ENCODE measurements at regions of chr16 and their contacts with region 1.

Region 1: DNA sequence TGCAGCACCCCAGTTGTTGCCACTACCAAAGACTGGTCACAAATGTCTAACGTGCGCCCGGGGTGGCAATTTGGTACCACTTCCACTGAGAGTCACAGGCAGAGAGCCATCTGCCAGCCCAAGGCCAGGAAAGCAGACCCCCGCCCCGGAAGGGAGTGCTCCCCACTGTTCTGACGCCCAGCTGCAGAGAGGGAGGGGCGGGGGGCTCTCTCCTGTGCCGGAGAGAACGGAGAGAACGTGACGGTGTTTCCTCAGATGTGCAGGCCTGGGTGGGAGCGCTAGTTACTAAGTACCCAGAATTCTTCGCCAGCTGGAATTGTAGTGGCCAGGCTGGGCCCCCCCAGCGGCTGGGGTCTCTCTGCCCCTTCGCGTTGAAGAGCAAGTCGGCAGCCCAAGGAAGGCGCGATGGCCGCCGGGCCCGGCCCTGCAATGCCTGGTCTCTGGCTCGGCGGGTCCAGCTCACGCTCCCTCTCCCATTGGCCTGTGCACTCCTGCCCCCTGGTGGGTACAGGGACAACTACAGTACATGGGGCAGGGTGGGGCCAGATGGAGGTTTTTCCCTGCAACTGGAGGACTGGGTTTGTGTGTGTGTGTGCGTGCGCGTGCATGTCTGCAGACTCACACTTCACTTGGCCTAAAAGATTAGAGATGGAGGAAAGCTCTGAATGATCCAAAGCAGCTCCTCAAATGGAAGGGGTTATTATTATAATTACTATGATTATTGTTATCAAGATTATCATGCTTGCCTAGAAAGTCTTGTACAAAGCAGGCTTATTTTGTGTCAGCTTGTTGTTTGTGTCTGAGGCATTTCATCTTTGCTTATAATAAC is 107.1 kb downstream of the AMFR start:
- DNase-seq: peak; percentile 83 to 90
- H3K4me3 ChIP-seq: no peak overlapping the region
- H3K4me3 Mint-ChIP-seq: peak overlapping the region; percentile 22
- H3K27ac Mint-ChIP-seq: no peak overlapping the region
- H3K4me1 ChIP-seq: no peaks in the 10 kb centered on the region
- H3K4me1 Mint-ChIP-seq: no peaks in the 10 kb centered on the region
- H3K27me3 ChIP-seq: no peaks in the 10 kb centered on the region
- H3K27me3 Mint-ChIP-seq: peaks cover 4% of the 10 kb centered on the region
- CTCF ChIP-seq: peak; percentile 95 to 98

Region 2: GRCh38 chr16:55711959-55712876 is 606.0 kb before region 1 on chr16:
- CTCF ChIA-PET with region 1: no interaction called
- POLR2A ChIA-PET with region 1: no interaction called
- intact Hi-C with region 1: loop called (anchors 1 kb)
- DNase-seq: peak; percentile 67 to 81
- H3K4me3 ChIP-seq: no peak overlapping the region
- H3K4me3 Mint-ChIP-seq: no peak overlapping the region
- H3K27ac Mint-ChIP-seq: no peak overlapping the region
- H3K4me1 ChIP-seq: no peaks in the 10 kb centered on the region
- H3K4me1 Mint-ChIP-seq: no peaks in the 10 kb centered on the region
- H3K27me3 ChIP-seq: no peaks in the 10 kb centered on the region; the same call in 1 of the 2 replicates
- H3K27me3 Mint-ChIP-seq: peaks cover 15% of the 10 kb centered on the region
- CTCF ChIP-seq: peak; percentile 79 to 80

Region 3: GRCh38 chr16:55944377-55944802 is 373.8 kb before region 1 on chr16:
- CTCF ChIA-PET with region 1: interaction called, 10 read pairs
- POLR2A ChIA-PET with region 1: no interaction called
- intact Hi-C with region 1: loop called (anchors 1 kb)
- DNase-seq: peak; percentile 67 to 82
- H3K4me3 ChIP-seq: no peak overlapping the region
- H3K4me3 Mint-ChIP-seq: no peak overlapping the region
- H3K27ac Mint-ChIP-seq: no peak overlapping the region
- H3K4me1 ChIP-seq: peaks cover 9% of the 10 kb centered on the region; the same call in 1 of the 2 replicates
- H3K4me1 Mint-ChIP-seq: peaks cover 9% of the 10 kb centered on the region
- H3K27me3 ChIP-seq: no peaks in the 10 kb centered on the region
- H3K27me3 Mint-ChIP-seq: peaks cover 16% of the 10 kb centered on the region
- CTCF ChIP-seq: peak; percentile 90 to 98

Region 4: GRCh38 chr16:56041686-56042085 is 276.5 kb before region 1 on chr16:
- CTCF ChIA-PET with region 1: no interaction called
- POLR2A ChIA-PET with region 1: no interaction called
- intact Hi-C with region 1: loop called (anchors 1 kb)
- DNase-seq: peak; percentile 73 to 84
- H3K4me3 ChIP-seq: no peak overlapping the region
- H3K4me3 Mint-ChIP-seq: no peak overlapping the region
- H3K27ac Mint-ChIP-seq: no peak overlapping the region
- H3K4me1 ChIP-seq: no peaks in the 10 kb centered on the region
- H3K4me1 Mint-ChIP-seq: peaks cover 6% of the 10 kb centered on the region
- H3K27me3 ChIP-seq: no peaks in the 10 kb centered on the region
- H3K27me3 Mint-ChIP-seq: peaks cover 4% of the 10 kb centered on the region
- CTCF ChIP-seq: peak; percentile 57 to 64

Region 5: DNA sequence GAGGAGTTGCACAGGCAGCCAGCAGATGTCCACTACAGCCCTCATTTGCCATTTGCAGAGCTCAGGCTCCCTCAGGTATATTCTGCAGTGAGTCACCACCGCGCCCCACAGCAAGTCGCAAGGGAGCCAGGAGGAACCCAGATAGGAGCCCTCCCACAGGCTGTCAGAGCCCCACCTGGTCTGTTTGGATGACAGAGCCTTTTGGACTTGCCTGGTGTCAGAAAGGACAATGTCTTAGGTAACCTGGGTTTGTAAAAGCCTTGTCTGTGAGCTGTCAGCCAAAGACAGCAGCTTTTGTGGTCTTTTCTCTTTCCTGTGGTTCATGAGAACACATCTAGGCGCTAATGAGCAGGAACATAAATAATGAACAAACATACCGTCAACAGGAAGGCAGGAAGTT is 56.1 kb before region 1 on chr16:
- CTCF ChIA-PET with region 1: interaction called, 10 read pairs
- POLR2A ChIA-PET with region 1: no interaction called
- intact Hi-C with region 1: no loop called
- DNase-seq: peak; percentile 43 to 60
- H3K4me3 ChIP-seq: no peak overlapping the region
- H3K4me3 Mint-ChIP-seq: no peak overlapping the region
- H3K27ac Mint-ChIP-seq: no peak overlapping the region
- H3K4me1 ChIP-seq: peaks cover 19% of the 10 kb centered on the region
- H3K4me1 Mint-ChIP-seq: peaks cover 26% of the 10 kb centered on the region
- H3K27me3 ChIP-seq: no peaks in the 10 kb centered on the region
- H3K27me3 Mint-ChIP-seq: no peaks in the 10 kb centered on the region
- CTCF ChIP-seq: no peak

Region 6: GRCh38 chr16:56356276-56357240 is 38.3 kb after region 1 on chr16:
- CTCF ChIA-PET with region 1: interaction called, 13 read pairs
- POLR2A ChIA-PET with region 1: no interaction called
- intact Hi-C with region 1: no loop called
- DNase-seq: peak; percentile 89 to 91
- H3K4me3 ChIP-seq: peak overlapping the region; percentile 37
- H3K4me3 Mint-ChIP-seq: peak overlapping the region; percentile 87
- H3K27ac Mint-ChIP-seq: peak overlapping the region; percentile 43
- H3K4me1 ChIP-seq: peaks cover 9% of the 10 kb centered on the region
- H3K4me1 Mint-ChIP-seq: peaks cover 8% of the 10 kb centered on the region
- H3K27me3 ChIP-seq: no peaks in the 10 kb centered on the region
- H3K27me3 Mint-ChIP-seq: no peaks in the 10 kb centered on the region
- CTCF ChIP-seq: peak; percentile 89 to 99